Mammary epithelial cell (primary cell): ENCODE measurements at regions of chr16 and their contacts with region 1.

Region 1: DNA sequence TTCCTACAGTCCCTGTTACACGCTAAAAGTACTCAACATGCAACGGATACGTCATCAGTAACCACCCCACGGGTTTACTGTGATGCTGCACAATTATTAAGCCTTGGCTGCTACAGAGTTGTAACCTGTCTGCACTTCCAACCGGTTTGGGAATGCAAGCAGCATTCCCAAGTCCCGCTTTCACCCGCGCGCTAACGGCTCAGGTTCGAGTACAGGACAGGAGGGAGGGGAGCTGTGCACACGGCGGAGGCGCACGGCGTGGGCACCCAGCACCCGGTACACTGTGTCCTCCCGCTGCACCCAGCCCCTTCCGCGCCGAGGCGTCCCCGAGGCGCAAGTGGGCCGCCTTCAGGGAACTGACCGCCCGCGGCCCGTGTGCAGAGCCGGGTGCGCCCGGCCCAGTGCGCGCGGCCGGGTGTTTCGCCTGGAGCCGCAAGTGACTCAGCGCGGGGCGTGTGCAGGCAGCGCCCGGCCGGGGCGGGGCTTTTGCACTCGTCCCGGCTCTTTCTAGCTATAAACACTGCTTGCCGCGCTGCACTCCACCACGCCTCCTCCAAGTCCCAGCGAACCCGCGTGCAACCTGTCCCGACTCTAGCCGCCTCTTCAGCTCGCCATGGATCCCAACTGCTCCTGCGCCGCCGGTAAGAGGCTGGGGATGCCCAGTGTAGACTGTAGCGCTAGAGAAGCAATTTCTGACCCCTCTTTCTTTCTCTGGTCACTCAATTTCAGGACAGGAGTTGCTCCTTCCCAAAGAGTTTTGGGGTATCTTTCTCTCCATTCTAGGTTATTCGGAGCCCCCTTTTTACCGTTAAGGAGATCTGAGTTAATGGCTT is at the start of gene MT2A:
- DNase-seq: peak; percentile 97
- H3K4me3 ChIP-seq: peak within 1 kb of the TSS; percentile 45 to 81 (median 59)
- H3K27ac ChIP-seq: peak within 1 kb of the TSS; percentile 95
- H3K4me1 ChIP-seq: peaks cover 59% of the 10 kb centered on the region
- H3K27me3 ChIP-seq: no peaks in the 10 kb centered on the region
- CTCF ChIP-seq: no peak
- total RNA-seq, gene MT2A: 295 to 3,844 TPM

Region 2: DNA sequence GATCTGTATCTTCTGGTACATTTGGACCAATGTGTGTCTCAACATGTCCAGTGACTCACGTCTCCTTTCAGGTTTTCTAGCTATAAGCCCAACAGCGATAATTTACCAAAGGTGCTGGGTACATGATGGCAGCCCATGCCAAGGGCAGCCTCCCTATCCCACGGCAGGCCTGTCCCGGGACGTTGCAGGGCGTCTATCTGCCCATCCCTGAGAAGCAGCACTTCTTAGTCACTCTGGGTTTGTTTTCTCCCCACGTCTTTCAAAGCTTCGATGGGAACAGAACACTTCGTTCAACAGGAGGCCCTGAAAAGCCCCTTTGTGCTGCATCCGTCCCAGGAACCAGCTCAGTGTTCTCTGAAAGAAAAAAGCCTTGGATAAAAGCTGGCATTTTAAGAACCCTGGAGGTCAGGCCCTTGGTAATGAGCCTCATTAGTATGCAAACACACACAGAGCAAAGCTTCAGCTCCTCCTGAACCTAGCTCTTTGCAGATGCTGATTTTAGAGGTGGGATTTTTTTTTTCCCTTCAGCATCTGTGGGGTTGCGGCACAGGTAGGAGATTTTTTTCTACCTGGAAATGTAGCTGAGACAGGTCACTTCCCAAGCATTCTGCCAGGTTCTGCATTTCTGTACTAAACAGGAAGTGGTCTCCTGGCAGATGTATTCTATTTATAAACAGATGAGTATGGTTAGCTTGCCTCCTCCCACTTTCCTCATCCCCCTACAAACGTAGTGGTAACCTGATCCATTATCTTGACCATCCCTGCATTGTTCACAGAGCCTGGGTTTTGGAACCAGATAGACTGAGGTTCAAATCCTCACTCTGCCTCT is 60.9 kb before region 1 on chr16:
- CTCF ChIA-PET with region 1: no interaction called
- dilution Hi-C with region 1: loop called (anchors 5 kb)
- in situ Hi-C with region 1: no loop called
- intact Hi-C with region 1: no loop called
- DNase-seq: peak; percentile 82
- H3K4me3 ChIP-seq: peak overlapping the region in 1 of 3 experiments; percentile 29
- H3K27ac ChIP-seq: peak overlapping the region; percentile 84
- H3K4me1 ChIP-seq: peaks cover 35% of the 10 kb centered on the region
- H3K27me3 ChIP-seq: no peaks in the 10 kb centered on the region
- CTCF ChIP-seq: no peak

Region 3: DNA sequence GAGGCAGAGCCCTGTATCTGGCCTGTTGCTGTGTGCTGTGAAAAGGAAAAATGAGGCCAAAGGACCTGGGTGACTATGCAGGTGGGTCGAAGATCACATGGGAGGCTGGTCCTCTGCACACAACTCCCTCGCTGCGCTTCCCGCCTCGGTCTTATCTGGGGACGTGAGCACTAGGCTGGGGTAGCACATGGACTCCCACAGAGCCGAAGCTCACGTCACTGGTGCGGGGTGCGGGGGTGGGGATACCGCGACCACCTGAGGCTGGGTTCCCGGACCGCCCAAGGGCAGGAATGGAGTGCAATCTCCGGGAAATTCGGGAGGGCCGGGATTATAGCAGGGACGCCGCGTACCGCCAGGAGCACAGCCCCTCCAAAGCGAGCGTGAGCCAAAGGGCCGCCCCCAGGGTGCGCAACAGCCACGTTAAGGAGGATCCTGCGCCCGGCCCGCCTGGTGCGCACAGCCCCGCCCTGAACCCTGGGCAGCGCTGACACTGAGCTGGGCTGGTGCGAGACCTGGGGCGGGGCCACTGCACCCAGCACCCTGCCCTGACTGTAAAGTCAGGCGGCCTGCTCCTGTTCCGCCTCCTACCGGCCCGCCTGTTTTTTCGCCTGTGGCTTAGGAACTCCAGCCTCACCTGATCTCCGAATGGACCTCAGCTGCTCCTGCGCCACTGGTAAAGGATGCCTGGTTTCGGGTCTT is 35.0 kb after region 1 on chr16:
- CTCF ChIA-PET with region 1: no interaction called
- dilution Hi-C with region 1: no loop called
- in situ Hi-C with region 1: no loop called
- intact Hi-C with region 1: loop called (anchors 5 kb)
- DNase-seq: peak; percentile 56
- H3K4me3 ChIP-seq: no peak overlapping the region
- H3K27ac ChIP-seq: no peak overlapping the region
- H3K4me1 ChIP-seq: no peaks in the 10 kb centered on the region
- H3K27me3 ChIP-seq: peaks cover under 1% of the 10 kb centered on the region
- CTCF ChIP-seq: peak in 1 of 2 donors; percentile 31

Region 4: DNA sequence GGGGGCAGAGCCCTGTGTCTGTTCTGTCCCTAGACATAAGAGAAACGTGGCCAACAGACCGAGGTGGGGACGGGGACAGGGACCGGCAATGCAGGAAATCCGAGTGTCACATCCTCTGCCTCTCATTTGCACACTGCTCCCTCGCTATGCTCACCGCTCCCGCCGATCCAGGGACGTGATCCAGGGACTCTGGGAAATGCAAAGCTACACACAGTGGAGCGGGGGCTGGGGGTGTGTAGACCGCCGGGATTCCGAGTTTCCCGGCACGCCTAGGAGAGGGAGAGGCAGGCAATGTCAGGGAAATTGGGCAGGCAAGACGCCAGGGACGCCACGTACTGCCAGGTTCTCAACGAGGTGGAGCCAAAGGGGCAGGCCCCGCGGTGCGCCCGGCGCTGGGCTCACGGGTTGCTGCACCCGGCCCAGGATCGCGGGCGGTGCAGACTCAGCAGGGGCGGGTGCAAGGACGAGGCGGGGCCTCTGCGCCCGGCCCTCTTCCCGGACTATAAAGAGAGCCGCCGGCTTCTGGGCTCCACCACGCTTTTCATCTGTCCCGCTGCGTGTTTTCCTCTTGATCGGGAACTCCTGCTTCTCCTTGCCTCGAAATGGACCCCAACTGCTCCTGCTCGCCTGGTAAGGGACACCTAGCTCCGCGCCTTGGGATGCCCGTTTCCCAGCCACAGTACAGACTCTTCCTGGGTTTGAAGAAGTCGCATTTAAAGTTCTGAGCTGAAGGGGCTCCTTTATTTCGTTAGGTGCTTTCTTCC is 73.9 kb after region 1 on chr16 and contains the start of gene MT1X:
- CTCF ChIA-PET with region 1: interaction called, 14 read pairs
- dilution Hi-C with region 1: no loop called
- in situ Hi-C with region 1: no loop called
- intact Hi-C with region 1: loop called (anchors 5 kb)
- DNase-seq: peak; percentile 93
- H3K4me3 ChIP-seq: peak within 1 kb of the TSS; percentile 69 to 85 (median 76)
- H3K27ac ChIP-seq: peak within 1 kb of the TSS; percentile 61
- H3K4me1 ChIP-seq: peaks cover 41% of the 10 kb centered on the region
- H3K27me3 ChIP-seq: no peaks in the 10 kb centered on the region
- CTCF ChIP-seq: no peak
- total RNA-seq, gene MT1X: 85.4 to 591 TPM

Region 5: DNA sequence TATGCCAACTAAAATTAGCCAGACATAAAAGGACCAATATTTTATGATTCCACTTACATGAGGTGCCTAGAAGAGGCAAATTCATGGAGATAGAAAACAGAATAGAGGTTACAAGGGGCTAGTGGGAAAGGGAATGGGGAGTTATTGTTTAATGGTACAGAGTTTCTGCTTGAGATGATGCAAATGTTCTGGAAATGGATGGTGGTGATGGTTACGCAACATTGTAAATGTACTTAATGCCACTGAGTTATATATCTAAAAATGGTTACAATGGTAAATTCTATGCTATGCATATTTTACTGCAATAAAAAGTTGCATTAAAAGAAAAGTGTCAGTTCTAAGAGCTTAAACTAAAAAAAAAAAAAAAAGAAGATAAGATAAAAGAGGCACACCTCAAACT is 91.9 kb after region 1 on chr16:
- CTCF ChIA-PET with region 1: interaction called, 14 read pairs
- dilution Hi-C with region 1: no loop called
- in situ Hi-C with region 1: loop called in 1 of 2 experiments (anchors 5 kb)
- intact Hi-C with region 1: loop called (anchors 1 kb)
- DNase-seq: no peak
- H3K4me3 ChIP-seq: no peak overlapping the region
- H3K27ac ChIP-seq: no peak overlapping the region
- H3K4me1 ChIP-seq: peaks cover 6% of the 10 kb centered on the region
- H3K27me3 ChIP-seq: no peaks in the 10 kb centered on the region
- CTCF ChIP-seq: no peak